HAP-1 (cell line): ENCODE measurements at regions of chr10 and their contacts with region 1.

Region 1: GRCh38 chr10:28250782-28251181 is 52.1 kb downstream of the MPP7 start:
- DNase-seq: peak in 1 of 2 experiments; percentile 21
- H3K4me3 ChIP-seq: no peak overlapping the region
- H3K4me1 ChIP-seq: peaks cover 3% of the 10 kb centered on the region; the same call in 1 of the 2 replicates
- H3K27me3 ChIP-seq: peaks cover 3% of the 10 kb centered on the region

Region 2: GRCh38 chr10:28375399-28376369 is 124.9 kb after region 1 on chr10:
- in situ Hi-C with region 1: loop called (anchors 5 kb)
- DNase-seq: no peak
- H3K4me3 ChIP-seq: no peak overlapping the region
- H3K4me1 ChIP-seq: no peaks in the 10 kb centered on the region
- H3K27me3 ChIP-seq: no peaks in the 10 kb centered on the region

Region 3: GRCh38 chr10:28710202-28710886 is 459.6 kb after region 1 on chr10:
- in situ Hi-C with region 1: no loop called
- DNase-seq: no peak
- H3K4me3 ChIP-seq: no peak overlapping the region
- H3K4me1 ChIP-seq: peaks cover 14% of the 10 kb centered on the region
- H3K27me3 ChIP-seq: no peaks in the 10 kb centered on the region